ENCODE measurements at regions of chr15 and their contacts with region 1.

Region 1: GRCh38 chr15:53000410-53000809 is 210.3 kb upstream of the ONECUT1 start:
- DNase-seq: no peak
- H3K4me3 ChIP-seq: no peak overlapping the region
- H3K27ac ChIP-seq: no peak overlapping the region
- H3K4me1 ChIP-seq: no peaks in the 10 kb centered on the region
- H3K27me3 ChIP-seq: no peaks in the 10 kb centered on the region
- CTCF ChIP-seq: no peak
- POLR2A ChIP-seq: no peak

Region 2: GRCh38 chr15:51992976-51993375 is 1007.4 kb before region 1 on chr15:
- intact Hi-C with region 1: no loop called
- DNase-seq: no peak
- H3K4me3 ChIP-seq: no peak overlapping the region
- H3K27ac ChIP-seq: no peak overlapping the region
- H3K4me1 ChIP-seq: no peaks in the 10 kb centered on the region
- H3K27me3 ChIP-seq: no peaks in the 10 kb centered on the region
- CTCF ChIP-seq: no peak
- POLR2A ChIP-seq: no peak

Region 3: GRCh38 chr15:52975941-52976450 is 24.4 kb before region 1 on chr15:
- intact Hi-C with region 1: loop called (anchors 1 kb)
- DNase-seq: no peak
- H3K4me3 ChIP-seq: no peak overlapping the region
- H3K27ac ChIP-seq: no peak overlapping the region
- H3K4me1 ChIP-seq: no peaks in the 10 kb centered on the region
- H3K27me3 ChIP-seq: peaks cover 0 to 8% of the 10 kb centered on the region in 2 donors
- CTCF ChIP-seq: no peak
- POLR2A ChIP-seq: no peak

Region 4: DNA sequence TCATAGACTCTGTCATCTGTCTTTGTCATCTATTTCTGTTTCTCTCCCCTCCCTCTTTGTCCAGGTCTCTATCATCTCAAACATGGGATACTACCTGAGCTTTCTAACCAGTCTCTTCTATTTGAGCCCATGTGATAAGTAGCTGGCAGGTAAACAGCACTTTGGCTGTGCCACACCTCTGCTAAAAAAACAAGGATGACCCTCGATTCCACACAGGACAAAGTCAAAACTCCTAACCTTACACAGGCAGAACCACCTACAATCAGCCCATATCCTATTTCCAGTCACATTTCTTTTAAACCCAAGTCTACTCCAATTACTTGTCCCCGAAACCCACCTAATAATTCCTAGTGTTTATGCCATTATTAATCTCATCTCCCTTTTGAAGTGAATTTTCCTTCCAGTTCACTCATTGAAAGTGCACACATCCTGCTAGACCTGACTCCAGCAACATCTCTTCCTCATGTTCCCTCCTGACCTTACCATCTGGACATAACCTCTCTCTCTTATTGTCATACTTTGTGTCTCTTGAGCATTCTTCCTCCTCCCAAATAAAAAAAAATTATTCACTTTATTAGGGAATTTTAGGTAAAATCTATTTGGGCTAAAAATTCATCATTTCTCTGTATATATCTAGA is 45.9 kb after region 1 on chr15:
- intact Hi-C with region 1: no loop called
- DNase-seq: no peak
- H3K4me3 ChIP-seq: no peak overlapping the region
- H3K27ac ChIP-seq: no peak overlapping the region
- H3K4me1 ChIP-seq: no peaks in the 10 kb centered on the region
- H3K27me3 ChIP-seq: no peaks in the 10 kb centered on the region
- CTCF ChIP-seq: no peak
- POLR2A ChIP-seq: no peak